ENCODE measurements at regions of chr12 and their contacts with region 1.

Region 1: DNA sequence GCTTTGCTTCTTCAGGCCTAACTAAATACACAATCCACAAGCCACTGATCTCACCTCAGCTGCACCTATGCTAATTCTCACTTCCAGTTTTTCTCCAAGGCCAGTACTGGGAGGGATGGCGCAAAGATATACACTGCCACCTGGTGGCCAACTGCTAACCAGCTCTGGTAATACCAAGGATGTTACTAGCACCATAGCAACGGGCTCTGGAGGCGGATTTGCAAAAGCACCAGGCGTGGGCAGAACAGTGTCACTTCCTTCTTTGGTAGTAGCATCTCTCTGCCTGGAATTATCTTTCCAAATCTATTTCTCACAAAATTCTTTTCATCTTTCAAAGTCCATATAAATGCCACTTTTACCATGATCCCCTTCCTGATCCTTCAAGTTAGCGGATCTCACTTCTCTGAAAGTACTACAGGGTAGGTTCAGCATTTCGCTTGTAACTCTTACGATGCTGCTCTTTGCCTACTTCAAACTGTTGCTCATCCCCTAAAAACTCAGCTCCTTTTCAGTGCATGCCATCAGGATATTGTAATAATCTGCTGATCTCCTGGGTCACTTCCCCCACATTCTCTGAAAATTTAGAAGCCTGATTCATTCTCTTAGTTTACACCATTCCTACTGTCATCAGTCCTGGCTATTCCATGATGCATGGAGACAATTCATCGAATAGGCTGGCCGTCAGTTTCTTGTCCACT is 37.1 kb upstream of the FOXJ2 start:
- DNase-seq: peak; percentile 86 to 94 (median 93)
- H3K4me3 ChIP-seq: no peak overlapping the region
- H3K4me3 Mint-ChIP-seq: no peak overlapping the region
- H3K27ac ChIP-seq: peak overlapping the region in 1 of 2 donors; percentile 59
- H3K27ac Mint-ChIP-seq: no peak overlapping the region
- H3K4me1 ChIP-seq: peaks cover 26 to 40% of the 10 kb centered on the region in 2 donors
- H3K4me1 Mint-ChIP-seq: peaks cover 15% of the 10 kb centered on the region
- H3K27me3 ChIP-seq: no peaks in the 10 kb centered on the region
- H3K27me3 Mint-ChIP-seq: peaks cover 0 to 5% (median 0%) of the 10 kb centered on the region in 3 donors
- CTCF ChIP-seq: peak; percentile 84

Region 2: GRCh38 chr12:7859552-7859951 is 135.9 kb before region 1 on chr12:
- intact Hi-C with region 1: loop called (anchors 2 to 10 kb)
- DNase-seq: no peak
- H3K4me3 ChIP-seq: no peak overlapping the region
- H3K4me3 Mint-ChIP-seq: no peak overlapping the region
- H3K27ac ChIP-seq: no peak overlapping the region
- H3K27ac Mint-ChIP-seq: peak overlapping the region in 2 of 7 donors; percentile 11 to 13
- H3K4me1 ChIP-seq: peaks cover 0 to 6% of the 10 kb centered on the region in 2 donors
- H3K4me1 Mint-ChIP-seq: peaks cover 26% of the 10 kb centered on the region
- H3K27me3 ChIP-seq: no peaks in the 10 kb centered on the region
- H3K27me3 Mint-ChIP-seq: peaks cover 0 to 9% (median 2%) of the 10 kb centered on the region in 3 donors
- CTCF ChIP-seq: no peak

Region 3: GRCh38 chr12:7869127-7869526 is 126.3 kb before region 1 on chr12:
- intact Hi-C with region 1: loop called in 1 of 2 experiments (anchors 10 kb)
- DNase-seq: no peak
- H3K4me3 ChIP-seq: no peak overlapping the region
- H3K4me3 Mint-ChIP-seq: no peak overlapping the region
- H3K27ac ChIP-seq: no peak overlapping the region
- H3K27ac Mint-ChIP-seq: no peak overlapping the region
- H3K4me1 ChIP-seq: peaks cover 10 to 11% of the 10 kb centered on the region in 2 donors
- H3K4me1 Mint-ChIP-seq: peaks cover 28% of the 10 kb centered on the region
- H3K27me3 ChIP-seq: peaks cover 7 to 39% of the 10 kb centered on the region in 2 donors
- H3K27me3 Mint-ChIP-seq: peaks cover 31 to 34% (median 34%) of the 10 kb centered on the region in 3 donors
- CTCF ChIP-seq: no peak

Region 4: DNA sequence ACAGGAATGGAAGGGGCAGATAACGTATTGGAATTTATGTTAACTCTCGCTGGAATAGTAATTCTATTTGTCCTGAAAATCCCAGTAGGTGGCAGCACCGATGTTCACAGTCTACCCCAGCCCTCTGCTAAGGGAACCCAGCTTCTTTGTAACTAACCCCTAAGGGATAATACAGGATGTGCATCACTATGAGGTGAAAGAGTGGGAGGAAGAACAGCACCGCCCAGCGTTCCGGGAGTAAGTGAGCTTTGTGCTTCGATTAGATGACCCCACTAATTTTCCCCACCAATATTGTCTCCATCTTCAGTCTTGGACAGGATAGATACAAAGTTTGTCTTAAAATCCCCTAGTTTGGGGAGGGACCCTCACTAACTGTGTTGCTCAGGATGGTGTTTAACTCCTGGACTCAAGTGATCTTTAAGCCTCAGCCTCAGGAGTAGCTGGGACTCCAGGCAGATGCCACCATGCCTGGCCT is 62.1 kb before region 1 on chr12:
- intact Hi-C with region 1: loop called (anchors 1 to 2 kb)
- DNase-seq: peak; percentile 76 to 93 (median 86)
- H3K4me3 ChIP-seq: peak overlapping the region; percentile 70 to 100 (median 100)
- H3K4me3 Mint-ChIP-seq: no peak overlapping the region
- H3K27ac ChIP-seq: peak overlapping the region; percentile 73 to 87
- H3K27ac Mint-ChIP-seq: no peak overlapping the region
- H3K4me1 ChIP-seq: peaks cover 43 to 54% of the 10 kb centered on the region in 2 donors
- H3K4me1 Mint-ChIP-seq: peaks cover 11% of the 10 kb centered on the region
- H3K27me3 ChIP-seq: no peaks in the 10 kb centered on the region
- H3K27me3 Mint-ChIP-seq: no peaks in the 10 kb centered on the region
- CTCF ChIP-seq: peak; percentile 78

Region 5: DNA sequence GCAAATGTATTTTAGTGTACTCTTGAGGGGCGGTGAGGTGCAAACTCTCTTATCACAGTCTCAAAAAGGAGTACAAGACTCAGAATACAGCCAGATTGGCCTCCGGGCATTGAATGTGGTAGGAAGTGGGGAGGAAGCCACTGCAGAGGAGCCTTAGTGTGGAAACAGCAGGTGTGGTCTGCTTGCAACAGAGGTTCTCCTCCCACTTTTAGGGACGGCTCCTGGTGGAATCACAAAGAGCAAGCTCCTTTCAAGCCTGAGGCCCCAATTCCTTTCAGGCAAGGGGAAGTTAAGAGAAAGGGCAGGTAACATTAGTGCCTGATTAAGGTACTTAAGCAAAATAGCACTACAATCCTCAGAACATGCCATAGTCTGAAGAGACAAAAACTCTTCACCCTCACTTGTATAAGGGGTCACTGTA is 35.7 kb before region 1 on chr12:
- intact Hi-C with region 1: loop called (anchors 2 to 5 kb)
- DNase-seq: peak in 2 of 3 donors; percentile 39 to 44
- H3K4me3 ChIP-seq: peak overlapping the region; percentile 36 to 85 (median 80)
- H3K4me3 Mint-ChIP-seq: peak overlapping the region; percentile 79 to 93
- H3K27ac ChIP-seq: peak overlapping the region; percentile 81 to 91
- H3K27ac Mint-ChIP-seq: peak overlapping the region; percentile 91 to 99 (median 96)
- H3K4me1 ChIP-seq: peaks cover 42 to 50% of the 10 kb centered on the region in 2 donors
- H3K4me1 Mint-ChIP-seq: peaks cover 48% of the 10 kb centered on the region
- H3K27me3 ChIP-seq: no peaks in the 10 kb centered on the region
- H3K27me3 Mint-ChIP-seq: peaks cover 0 to 2% (median 2%) of the 10 kb centered on the region in 3 donors
- CTCF ChIP-seq: no peak

Region 6: GRCh38 chr12:8032242-8033152 is 37.1 kb after region 1 on chr12 and contains the start of gene FOXJ2:
- intact Hi-C with region 1: no loop called
- DNase-seq: peak; percentile 50 to 56 (median 52)
- H3K4me3 ChIP-seq: peak within 1 kb of the TSS; percentile 81 to 97 (median 94)
- H3K4me3 Mint-ChIP-seq: peak within 1 kb of the TSS; percentile 88 to 94
- H3K27ac ChIP-seq: peak within 1 kb of the TSS; percentile 71 to 92
- H3K27ac Mint-ChIP-seq: peak within 1 kb of the TSS; percentile 82 to 92 (median 88)
- H3K4me1 ChIP-seq: peaks cover 53 to 59% of the 10 kb centered on the region in 2 donors
- H3K4me1 Mint-ChIP-seq: peaks cover 54% of the 10 kb centered on the region
- H3K27me3 ChIP-seq: no peaks in the 10 kb centered on the region
- H3K27me3 Mint-ChIP-seq: peaks cover 0 to 2% (median 0%) of the 10 kb centered on the region in 3 donors
- CTCF ChIP-seq: no peak
- polyA plus RNA-seq, gene FOXJ2: 4.9 to 15.0 (median 7.4) TPM

Region 7: GRCh38 chr12:8078398-8078797 is 83.0 kb after region 1 on chr12:
- intact Hi-C with region 1: no loop called
- DNase-seq: peak in 2 of 3 donors; percentile 51 to 69
- H3K4me3 ChIP-seq: no peak overlapping the region
- H3K4me3 Mint-ChIP-seq: no peak overlapping the region
- H3K27ac ChIP-seq: no peak overlapping the region
- H3K27ac Mint-ChIP-seq: peak overlapping the region in 1 of 7 donors; percentile 78
- H3K4me1 ChIP-seq: peaks cover 44 to 64% of the 10 kb centered on the region in 2 donors
- H3K4me1 Mint-ChIP-seq: peaks cover 54% of the 10 kb centered on the region
- H3K27me3 ChIP-seq: no peaks in the 10 kb centered on the region
- H3K27me3 Mint-ChIP-seq: no peaks in the 10 kb centered on the region
- CTCF ChIP-seq: peak; percentile 58